Vagina (tissue), 2 donors: ENCODE measurements at regions of chr12 and their contacts with region 1.

Region 1: GRCh38 chr12:109477185-109477962 is at the starts of genes KCTD10 and UBE3B:
- DNase-seq: no peak
- H3K4me3 ChIP-seq: peak within 1 kb of the TSS; percentile 61 to 83
- H3K27ac ChIP-seq: peak within 1 kb of the TSS; percentile 97
- H3K4me1 ChIP-seq: peaks cover 61% of the 10 kb centered on the region
- H3K27me3 ChIP-seq: no peaks in the 10 kb centered on the region
- CTCF ChIP-seq: peak in 2 of 3 experiments; percentile 5 to 22
- POLR2A ChIP-seq: peak in 1 of 2 donors; percentile 65
- total RNA-seq, gene KCTD10: 86.2 TPM
- total RNA-seq, gene UBE3B: 32.2 TPM

Region 2: DNA sequence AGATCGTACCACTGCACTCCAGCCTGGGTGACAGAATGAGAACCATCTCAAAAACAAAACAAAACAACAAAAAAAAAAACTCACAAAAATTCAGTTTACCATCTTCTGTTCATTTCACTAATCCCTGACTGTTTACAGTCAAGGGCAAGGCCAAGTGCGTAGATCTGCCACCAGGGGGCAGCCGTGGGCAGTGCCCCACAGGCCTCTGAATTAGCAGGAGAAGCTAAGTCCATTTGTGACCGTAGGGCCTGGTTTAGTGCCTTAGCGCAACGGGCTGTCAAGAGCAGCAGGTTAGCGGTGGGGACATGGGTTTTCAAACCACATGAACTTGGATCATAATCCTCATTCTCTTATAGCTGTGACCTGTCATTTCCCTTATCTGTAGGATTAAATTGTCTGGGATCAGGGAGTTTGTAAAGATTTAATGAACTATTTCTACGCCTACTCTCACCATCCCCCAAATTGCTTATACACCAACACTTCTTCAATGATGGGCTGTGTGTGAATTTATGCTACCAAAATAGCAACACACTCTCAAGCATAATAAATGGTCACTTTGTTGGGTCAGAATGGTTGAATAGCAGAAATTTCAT is 49.2 kb before region 1 on chr12:
- intact Hi-C with region 1: loop called (anchors 2 kb)
- DNase-seq: no peak
- H3K4me3 ChIP-seq: no peak overlapping the region
- H3K27ac ChIP-seq: no peak overlapping the region
- H3K4me1 ChIP-seq: no peaks in the 10 kb centered on the region
- H3K27me3 ChIP-seq: no peaks in the 10 kb centered on the region
- CTCF ChIP-seq: peak; percentile 78 to 91 (median 85)
- POLR2A ChIP-seq: no peak